HCT116 (cell line): ENCODE measurements at regions of chr19 and their contacts with region 1.

Region 1: GRCh38 chr19:10289167-10289835 is 451 bp upstream of the ICAM5 start:
- DNase-seq: peak; percentile 77
- ATAC-seq: peak; percentile 65
- H3K4me3 ChIP-seq: peak overlapping the region; percentile 77 to 91
- H3K27ac ChIP-seq: peak overlapping the region; percentile 76
- H3K4me1 ChIP-seq: peaks cover 13 to 60% of the 10 kb centered on the region in 2 experiments
- H3K27me3 ChIP-seq: no peaks in the 10 kb centered on the region
- CTCF ChIP-seq: no peak
- POLR2A ChIP-seq: no peak
- RAD21 ChIP-seq: no peak

Region 2: DNA sequence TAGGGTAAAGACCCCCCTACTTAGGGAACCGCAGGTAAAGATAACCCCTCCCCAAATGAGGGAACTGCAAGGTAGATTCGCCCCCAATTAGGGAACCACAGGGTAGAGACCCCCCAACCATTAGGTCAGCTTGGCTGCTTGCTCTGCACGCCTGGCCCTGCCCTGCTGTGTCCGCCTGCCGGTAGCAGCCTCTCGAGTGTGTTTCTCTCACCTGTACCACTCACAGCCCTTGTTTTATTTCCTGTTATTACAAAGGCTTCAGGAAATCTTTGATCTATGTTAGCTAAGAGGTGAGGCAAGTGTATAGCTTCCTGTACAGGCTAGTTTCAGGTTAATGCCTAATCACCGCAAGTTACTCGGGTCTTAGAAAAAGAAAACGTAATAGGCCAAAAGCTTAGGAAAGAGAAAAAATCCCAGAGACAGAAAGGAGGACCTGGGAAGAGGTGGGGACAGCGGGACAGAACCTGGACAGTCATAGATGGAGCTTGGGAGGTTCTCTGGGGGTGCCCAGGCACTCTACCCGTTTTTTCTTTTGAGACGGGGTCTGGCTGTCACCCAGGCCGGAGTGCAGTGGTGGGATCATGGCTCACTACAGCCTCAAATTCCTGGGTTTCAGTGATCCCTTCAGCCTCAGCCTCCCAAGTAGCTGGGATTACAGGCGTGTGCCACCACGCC is 146.5 kb before region 1 on chr19:
- CTCF ChIA-PET with region 1: no interaction called
- POLR2A ChIA-PET with region 1: no interaction called
- RAD21 ChIA-PET with region 1: no interaction called
- intact Hi-C with region 1: no loop called
- DNase-seq: no peak
- ATAC-seq: no peak
- H3K4me3 ChIP-seq: no peak overlapping the region
- H3K27ac ChIP-seq: no peak overlapping the region
- H3K4me1 ChIP-seq: no peaks in the 10 kb centered on the region
- H3K27me3 ChIP-seq: no peaks in the 10 kb centered on the region
- CTCF ChIP-seq: no peak
- POLR2A ChIP-seq: no peak
- RAD21 ChIP-seq: no peak

Region 3: GRCh38 chr19:10238172-10238783 is 51.0 kb before region 1 on chr19:
- CTCF ChIA-PET with region 1: no interaction called
- POLR2A ChIA-PET with region 1: no interaction called
- RAD21 ChIA-PET with region 1: no interaction called
- intact Hi-C with region 1: no loop called
- DNase-seq: no peak
- ATAC-seq: no peak
- H3K4me3 ChIP-seq: no peak overlapping the region
- H3K27ac ChIP-seq: no peak overlapping the region
- H3K4me1 ChIP-seq: peaks cover 17 to 28% of the 10 kb centered on the region in 2 experiments
- H3K27me3 ChIP-seq: no peaks in the 10 kb centered on the region
- CTCF ChIP-seq: no peak
- POLR2A ChIP-seq: no peak
- RAD21 ChIP-seq: no peak

Region 4: GRCh38 chr19:10259162-10259905 is 30.0 kb before region 1 on chr19:
- CTCF ChIA-PET with region 1: interaction called, 30 read pairs
- POLR2A ChIA-PET with region 1: interaction called, 11 read pairs
- RAD21 ChIA-PET with region 1: interaction called in 1 of 2 experiments, 3 read pairs
- intact Hi-C with region 1: no loop called
- DNase-seq: peak; percentile 82
- ATAC-seq: peak; percentile 71
- H3K4me3 ChIP-seq: no peak overlapping the region
- H3K27ac ChIP-seq: peak overlapping the region; percentile 56
- H3K4me1 ChIP-seq: peaks cover 24 to 32% of the 10 kb centered on the region in 2 experiments
- H3K27me3 ChIP-seq: no peaks in the 10 kb centered on the region
- CTCF ChIP-seq: peak; percentile 77 to 86 (median 80)
- POLR2A ChIP-seq: no peak
- RAD21 ChIP-seq: peak; percentile 82

Region 5: DNA sequence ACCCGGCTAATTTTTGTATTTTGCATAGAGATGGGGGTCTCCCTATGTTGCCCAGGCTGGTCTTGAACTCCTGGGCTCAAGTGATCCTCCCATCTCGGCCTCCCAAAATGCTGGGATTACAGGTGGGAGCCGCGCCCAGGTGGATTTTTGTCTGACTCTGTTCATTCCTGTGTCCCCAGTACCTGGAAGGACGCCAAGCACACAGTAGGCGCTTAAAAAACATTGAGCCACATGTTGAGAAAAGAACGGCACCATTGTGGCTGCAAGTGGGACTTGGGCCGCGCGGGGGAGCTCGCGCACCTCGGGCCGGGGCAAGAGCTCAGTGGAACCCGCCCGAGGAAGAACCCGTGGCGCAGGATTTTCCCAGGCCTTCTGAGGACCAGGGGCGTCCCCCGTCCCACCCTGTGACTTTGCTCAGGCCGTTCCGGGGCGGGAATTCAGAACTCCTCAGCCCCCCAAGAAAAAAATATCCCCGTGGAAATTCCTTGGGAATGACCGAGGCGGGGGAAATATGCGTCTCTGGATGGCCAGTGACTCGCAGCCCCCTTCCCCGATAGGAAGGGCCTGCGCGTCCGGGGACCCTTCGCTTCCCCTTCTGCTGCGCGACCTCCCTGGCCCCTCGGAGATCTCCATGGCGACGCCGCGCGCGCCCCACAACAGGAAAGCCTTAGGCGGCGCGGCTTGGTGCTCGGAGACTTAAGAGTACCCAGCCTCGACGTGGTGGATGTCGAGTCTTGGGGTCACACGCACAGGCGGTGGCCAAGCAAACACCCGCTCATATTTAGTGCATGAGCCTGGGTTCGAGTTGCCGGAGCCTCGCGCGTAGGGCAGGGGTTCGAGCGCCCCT is 19.7 kb before region 1 on chr19:
- CTCF ChIA-PET with region 1: interaction called, 18 read pairs
- POLR2A ChIA-PET with region 1: interaction called, 6 read pairs
- RAD21 ChIA-PET with region 1: interaction called in 1 of 2 experiments, 4 read pairs
- intact Hi-C with region 1: no loop called
- DNase-seq: peak; percentile 47
- ATAC-seq: peak; percentile 84
- H3K4me3 ChIP-seq: peak overlapping the region; percentile 22 to 28; a peak in 3 of 4 replicates
- H3K27ac ChIP-seq: peak overlapping the region; percentile 8; the same call in 1 of the 2 replicates
- H3K4me1 ChIP-seq: peaks cover 7 to 22% of the 10 kb centered on the region in 2 experiments; a peak in 3 of 4 replicates
- H3K27me3 ChIP-seq: no peaks in the 10 kb centered on the region
- CTCF ChIP-seq: peak; percentile 91 to 95 (median 94)
- POLR2A ChIP-seq: no peak
- RAD21 ChIP-seq: peak; percentile 99

Region 6: DNA sequence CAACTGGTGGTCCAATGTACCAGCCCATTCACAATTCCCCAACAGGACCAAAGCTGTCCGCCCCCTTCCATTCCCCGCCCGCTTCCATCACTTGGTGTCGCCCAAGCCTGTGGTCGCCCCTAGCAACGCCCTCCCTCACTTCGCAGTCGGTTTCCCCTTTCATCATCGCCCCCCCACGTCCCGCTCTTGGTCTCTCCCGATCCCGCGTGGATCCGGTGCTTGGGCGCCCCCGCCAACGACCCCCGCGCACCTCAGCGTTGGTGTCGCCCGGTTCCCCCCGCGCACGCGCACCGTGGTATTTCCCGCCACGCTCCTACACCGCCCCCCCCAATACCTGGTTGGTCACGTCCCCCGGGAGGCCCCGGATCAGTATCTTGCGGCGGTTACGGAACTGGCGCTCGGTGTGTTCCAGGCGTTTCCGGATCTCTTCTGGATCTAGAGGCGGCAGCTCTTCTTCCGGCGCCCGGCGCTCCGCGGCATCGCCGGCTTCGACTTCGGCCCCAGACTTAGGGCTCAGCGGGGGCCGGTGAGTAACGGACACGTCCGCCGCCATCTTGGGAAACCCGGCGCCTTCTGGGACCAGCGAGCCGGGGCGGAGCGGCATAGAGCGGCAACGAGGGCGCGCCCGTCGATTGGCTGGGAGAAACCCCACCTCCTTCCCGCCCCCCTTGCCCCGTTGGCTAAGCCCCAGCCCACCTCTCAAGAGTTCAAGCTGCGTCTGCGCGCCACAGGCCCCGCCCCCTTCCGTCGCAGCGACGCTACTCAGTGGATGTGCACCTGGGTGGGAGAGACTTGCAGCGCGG is 43.9 kb after region 1 on chr19 and contains the start of gene RAVER1:
- CTCF ChIA-PET with region 1: interaction called, 3 read pairs
- POLR2A ChIA-PET with region 1: interaction called, 26 read pairs
- RAD21 ChIA-PET with region 1: interaction called, 4 to 6 read pairs
- intact Hi-C with region 1: loop called (anchors 2 kb)
- DNase-seq: peak; percentile 92
- ATAC-seq: peak; percentile 81
- H3K4me3 ChIP-seq: peak within 1 kb of the TSS; percentile 77 to 93
- H3K27ac ChIP-seq: peak within 1 kb of the TSS; percentile 90
- H3K4me1 ChIP-seq: peaks cover 6 to 28% of the 10 kb centered on the region in 2 experiments; a peak in 3 of 4 replicates
- H3K27me3 ChIP-seq: no peaks in the 10 kb centered on the region
- CTCF ChIP-seq: no peak
- POLR2A ChIP-seq: peak; percentile 82
- RAD21 ChIP-seq: no peak
- total RNA-seq, gene RAVER1: 71.0 TPM

Region 7: DNA sequence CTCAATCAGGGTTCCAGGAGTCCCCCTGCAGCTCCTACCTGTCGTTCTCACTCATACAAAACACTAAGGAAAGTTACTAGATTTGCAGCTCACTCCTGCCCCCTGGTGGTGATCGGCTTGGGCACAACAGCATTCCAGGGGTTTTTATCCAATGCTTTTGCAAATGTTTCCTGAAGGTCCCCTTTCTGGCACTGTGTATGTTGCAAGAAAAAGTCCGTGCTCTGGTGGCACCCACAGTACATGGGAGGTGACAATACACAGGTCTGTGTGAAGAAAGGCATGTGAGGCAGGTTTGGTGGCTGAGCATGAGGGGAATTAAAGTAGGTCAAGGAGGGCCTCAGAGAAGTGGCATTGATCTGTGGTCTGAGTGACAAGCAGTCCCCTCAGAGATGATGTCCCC is 99.7 kb after region 1 on chr19:
- CTCF ChIA-PET with region 1: interaction called, 22 read pairs
- POLR2A ChIA-PET with region 1: no interaction called
- RAD21 ChIA-PET with region 1: no interaction called
- intact Hi-C with region 1: no loop called
- DNase-seq: peak; percentile 77
- ATAC-seq: peak; percentile 67
- H3K4me3 ChIP-seq: no peak overlapping the region
- H3K27ac ChIP-seq: no peak overlapping the region
- H3K4me1 ChIP-seq: 0 out of 4 replicates have a peak, but pooled peaks cover 0 to 3% of the 10 kb centered on the region in 2 experiments
- H3K27me3 ChIP-seq: no peaks in the 10 kb centered on the region
- CTCF ChIP-seq: peak; percentile 92 to 97 (median 97)
- POLR2A ChIP-seq: no peak
- RAD21 ChIP-seq: peak; percentile 95

Region 8: GRCh38 chr19:10416380-10417257 is 127.3 kb after region 1 on chr19:
- CTCF ChIA-PET with region 1: interaction called, 15 read pairs
- POLR2A ChIA-PET with region 1: interaction called, 4 read pairs
- RAD21 ChIA-PET with region 1: no interaction called
- intact Hi-C with region 1: no loop called
- DNase-seq: peak; percentile 89
- ATAC-seq: peak; percentile 56
- H3K4me3 ChIP-seq: peak overlapping the region; percentile 51 to 58
- H3K27ac ChIP-seq: peak overlapping the region; percentile 89
- H3K4me1 ChIP-seq: peaks cover 25 to 56% of the 10 kb centered on the region in 2 experiments
- H3K27me3 ChIP-seq: no peaks in the 10 kb centered on the region
- CTCF ChIP-seq: peak; percentile 80 to 99 (median 92)
- POLR2A ChIP-seq: no peak
- RAD21 ChIP-seq: no peak